ENCODE measurements at regions of chr13 and their contacts with region 1.

Region 1: DNA sequence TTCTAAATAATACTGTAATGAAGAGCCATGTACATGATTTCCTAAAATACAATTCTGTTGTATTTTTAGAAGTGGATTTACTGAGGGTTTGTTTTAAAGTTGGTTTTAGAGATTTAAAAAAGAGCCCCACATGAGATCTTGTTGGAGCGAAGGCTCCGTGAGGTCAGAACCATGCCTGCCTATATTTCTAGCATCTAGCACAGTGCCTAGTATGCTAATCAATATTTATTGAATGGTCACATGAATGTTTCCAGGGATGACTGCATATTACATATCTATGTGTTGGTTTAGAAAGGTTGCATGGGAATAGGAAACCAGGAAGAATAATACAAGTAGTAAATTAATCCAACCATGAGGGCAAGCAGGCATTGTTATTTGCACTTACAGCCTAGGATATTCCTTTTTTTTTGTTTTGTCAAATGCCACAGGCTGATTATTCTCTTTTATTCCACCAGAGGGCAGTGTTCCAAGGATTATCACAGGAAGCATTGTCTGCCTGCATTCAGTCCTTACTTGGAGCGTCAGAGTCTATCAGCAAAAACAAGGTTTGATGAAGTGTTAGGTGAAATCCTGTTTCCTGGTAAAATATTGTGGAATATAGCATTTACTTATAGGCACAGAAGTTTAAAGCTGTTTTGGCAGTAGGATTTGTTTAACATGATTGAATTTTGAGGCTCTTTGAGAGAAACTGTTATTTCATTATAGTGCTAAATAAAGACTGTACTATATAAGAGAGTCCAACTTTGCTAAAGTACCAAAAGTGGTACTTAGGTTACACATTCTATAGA is 46.8 kb downstream of the COG3 start:
- DNase-seq: peak; percentile 72
- ATAC-seq: peak; percentile 88
- H3K4me3 ChIP-seq: no peak overlapping the region
- H3K27ac ChIP-seq: no peak overlapping the region
- H3K4me1 ChIP-seq: no peaks in the 10 kb centered on the region
- H3K27me3 ChIP-seq: no peaks in the 10 kb centered on the region
- CTCF ChIP-seq: peak; percentile 75
- EP300 ChIP-seq: no peak
- POLR2A ChIP-seq: no peak
- RAD21 ChIP-seq: no peak

Region 2: DNA sequence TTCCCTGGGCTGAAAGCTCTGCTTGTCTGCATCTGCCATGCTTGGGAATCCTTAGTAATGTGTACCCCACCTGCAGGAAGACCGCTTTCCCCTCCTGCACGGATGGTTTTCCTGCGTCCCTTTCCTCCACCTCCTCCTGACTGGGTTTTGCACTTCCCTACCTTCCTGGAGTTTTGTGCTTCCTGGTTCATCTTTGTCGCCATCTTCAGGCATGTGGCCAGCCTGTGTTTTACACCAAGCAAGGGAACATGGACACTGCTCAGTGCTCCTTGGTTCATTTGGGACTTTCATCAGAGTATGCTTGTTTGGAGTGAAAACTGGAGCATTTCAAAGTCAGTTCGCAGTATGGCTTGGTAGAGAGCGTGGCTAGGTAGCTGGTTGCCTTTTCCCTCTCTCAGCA is 73.3 kb after region 1 on chr13:
- CTCF ChIA-PET with region 1: no interaction called
- POLR2A ChIA-PET with region 1: no interaction called
- in situ Hi-C with region 1: no loop called
- intact Hi-C with region 1: loop called (anchors 2 kb)
- DNase-seq: peak; percentile 20
- ATAC-seq: peak; percentile 82
- H3K4me3 ChIP-seq: no peak overlapping the region
- H3K27ac ChIP-seq: no peak overlapping the region
- H3K4me1 ChIP-seq: no peaks in the 10 kb centered on the region
- H3K27me3 ChIP-seq: peaks cover 0 to 7% of the 10 kb centered on the region in 2 experiments; a peak in 2 of 5 replicates
- CTCF ChIP-seq: peak; percentile 55
- EP300 ChIP-seq: no peak
- POLR2A ChIP-seq: no peak
- RAD21 ChIP-seq: no peak

Region 3: GRCh38 chr13:45718063-45718462 is 206.6 kb after region 1 on chr13:
- CTCF ChIA-PET with region 1: interaction called, 4 read pairs
- POLR2A ChIA-PET with region 1: no interaction called
- in situ Hi-C with region 1: no loop called
- intact Hi-C with region 1: loop called (anchors 5 kb)
- DNase-seq: peak; percentile 13
- ATAC-seq: peak; percentile 76
- H3K4me3 ChIP-seq: no peak overlapping the region
- H3K27ac ChIP-seq: no peak overlapping the region
- H3K4me1 ChIP-seq: no peaks in the 10 kb centered on the region
- H3K27me3 ChIP-seq: peaks cover 0 to 10% of the 10 kb centered on the region in 2 experiments; a peak in 2 of 5 replicates
- CTCF ChIP-seq: peak; percentile 71
- EP300 ChIP-seq: no peak
- POLR2A ChIP-seq: no peak
- RAD21 ChIP-seq: no peak

Region 4: GRCh38 chr13:45826731-45827130 is 315.2 kb after region 1 on chr13:
- CTCF ChIA-PET with region 1: no interaction called
- POLR2A ChIA-PET with region 1: no interaction called
- in situ Hi-C with region 1: no loop called
- intact Hi-C with region 1: no loop called
- DNase-seq: no peak
- ATAC-seq: no peak
- H3K4me3 ChIP-seq: no peak overlapping the region
- H3K27ac ChIP-seq: no peak overlapping the region
- H3K4me1 ChIP-seq: no peaks in the 10 kb centered on the region
- H3K27me3 ChIP-seq: no peaks in the 10 kb centered on the region
- CTCF ChIP-seq: no peak
- EP300 ChIP-seq: no peak
- POLR2A ChIP-seq: no peak
- RAD21 ChIP-seq: no peak